ENCODE measurements at regions of chr20 and their contacts with region 1.

Region 1: GRCh38 chr20:13771853-13772453 is 12.8 kb downstream of the ESF1 start:
- DNase-seq: no peak
- ATAC-seq: no peak

Region 2: DNA sequence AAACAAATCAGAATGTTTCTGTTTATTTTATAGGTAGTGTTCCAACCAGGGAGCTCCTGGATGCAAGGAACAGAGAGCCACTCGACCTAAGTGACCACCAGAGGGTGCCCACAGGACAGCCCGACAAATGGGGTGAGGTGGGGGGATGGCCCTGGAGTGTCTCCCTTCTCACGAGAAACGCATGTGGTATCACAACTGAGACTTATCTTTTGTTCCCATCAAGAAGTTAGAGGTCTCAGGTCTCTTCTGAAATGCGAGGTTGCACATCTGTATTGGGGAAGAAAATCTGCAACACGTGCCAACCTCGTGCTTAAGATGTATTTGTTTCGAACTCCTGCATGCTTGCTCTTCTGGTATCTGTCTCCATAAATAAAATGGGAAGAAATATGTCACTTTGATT is 446.9 kb before region 1 on chr20:
- intact Hi-C with region 1: loop called in 1 of 2 experiments (anchors 5 kb)
- DNase-seq: no peak
- ATAC-seq: no peak

Region 3: GRCh38 chr20:13947719-13948118 is 175.8 kb after region 1 on chr20:
- intact Hi-C with region 1: no loop called
- DNase-seq: no peak
- ATAC-seq: no peak

Measured in left cardiac atrium (tissue), 4 donors.